ENCODE measurements at regions of chr15 and their contacts with region 1.

Region 1: GRCh38 chr15:41011055-41011815 is 58.0 kb downstream of the CHAC1 start:
- DNase-seq: peak in 2 of 3 donors; percentile 36 to 42
- H3K4me3 ChIP-seq: no peak overlapping the region
- H3K27ac ChIP-seq: no peak overlapping the region
- H3K4me1 ChIP-seq: peaks cover 3 to 14% (median 7%) of the 10 kb centered on the region in 4 experiments
- H3K27me3 ChIP-seq: no peaks in the 10 kb centered on the region

Region 2: DNA sequence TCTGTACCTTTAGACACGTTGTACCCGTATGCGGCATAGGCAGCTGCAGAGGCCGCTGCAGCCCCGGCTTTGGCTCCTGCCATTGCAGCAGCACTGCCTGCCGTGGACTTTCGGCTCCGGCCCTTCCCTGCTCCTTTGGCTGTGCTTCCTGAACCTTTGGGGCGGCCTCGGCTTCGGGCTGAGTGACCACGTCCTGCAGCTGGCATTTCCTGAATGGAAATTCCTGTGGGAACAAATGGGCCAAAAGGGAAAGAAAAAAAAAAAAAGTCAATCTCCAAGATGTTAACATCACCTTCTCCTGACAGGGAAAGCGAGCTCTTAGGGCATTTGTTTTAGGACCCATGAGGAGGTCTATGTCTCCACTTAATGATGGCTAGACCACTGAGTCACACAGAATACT is 28.4 kb before region 1 on chr15:
- CTCF ChIA-PET with region 1: no interaction called
- POLR2A ChIA-PET with region 1: no interaction called
- DNase-seq: no peak
- H3K4me3 ChIP-seq: no peak overlapping the region
- H3K27ac ChIP-seq: no peak overlapping the region
- H3K4me1 ChIP-seq: no peaks in the 10 kb centered on the region
- H3K27me3 ChIP-seq: no peaks in the 10 kb centered on the region

Region 3: DNA sequence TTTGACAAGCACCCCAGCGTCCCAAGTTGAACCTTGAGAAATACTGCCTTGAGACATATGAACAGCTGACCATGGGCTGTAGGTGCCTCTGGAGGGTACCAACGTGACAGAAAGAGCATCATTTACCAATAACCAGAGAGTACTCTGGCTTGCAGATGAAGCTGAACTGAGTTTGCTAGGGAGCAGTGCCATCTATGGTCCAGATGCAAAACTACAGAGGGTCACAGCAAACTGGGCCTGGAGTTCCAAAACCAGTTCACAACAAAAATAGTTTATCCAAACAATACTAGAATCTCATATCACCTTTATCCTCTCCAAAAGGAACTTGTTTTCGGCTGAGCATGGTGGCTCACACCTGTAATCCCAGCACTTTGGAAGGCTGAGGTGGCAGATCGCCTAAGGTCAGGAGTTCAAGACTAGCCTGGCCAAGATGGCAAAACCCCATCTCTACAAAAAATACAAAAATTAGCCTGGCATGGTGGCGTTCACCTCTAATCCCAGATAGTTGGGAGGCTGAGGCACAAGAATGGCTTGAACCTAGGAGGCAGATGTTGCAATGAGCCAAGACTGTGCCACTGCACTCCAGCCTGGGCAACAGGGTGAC is 11.4 kb after region 1 on chr15:
- CTCF ChIA-PET with region 1: interaction called, 10 read pairs
- POLR2A ChIA-PET with region 1: no interaction called
- DNase-seq: peak; percentile 59 to 81 (median 76)
- H3K4me3 ChIP-seq: no peak overlapping the region
- H3K27ac ChIP-seq: no peak overlapping the region
- H3K4me1 ChIP-seq: peaks cover 1 to 10% (median 3%) of the 10 kb centered on the region in 4 experiments
- H3K27me3 ChIP-seq: no peaks in the 10 kb centered on the region

Measured in common myeloid progenitor, CD34-positive (primary cell).